CD4-positive, alpha-beta T cell (primary cell): ENCODE measurements at regions of chr7 and their contacts with region 1.

Region 1: GRCh38 chr7:55365675-55366460 is 731 bp downstream of the LANCL2 start:
- DNase-seq: peak; percentile 87 to 98 (median 94)
- ATAC-seq: peak; percentile 85
- H3K4me3 ChIP-seq: peak overlapping the region; percentile 72
- H3K4me3 Mint-ChIP-seq: peak overlapping the region; percentile 99
- H3K27ac ChIP-seq: peak overlapping the region; percentile 94 to 98
- H3K27ac Mint-ChIP-seq: no peak overlapping the region
- H3K4me1 ChIP-seq: peaks cover 16% of the 10 kb centered on the region
- H3K4me1 Mint-ChIP-seq: peaks cover 10% of the 10 kb centered on the region
- H3K27me3 ChIP-seq: no peaks in the 10 kb centered on the region
- H3K27me3 Mint-ChIP-seq: no peaks in the 10 kb centered on the region
- CTCF ChIP-seq: no peak

Region 2: GRCh38 chr7:54758702-54759592 is 606.9 kb before region 1 on chr7 and contains the start of gene SEC61G:
- CTCF ChIA-PET with region 1: interaction called, 4 read pairs
- POLR2A ChIA-PET with region 1: interaction called, 28 read pairs
- intact Hi-C with region 1: loop called in 1 of 2 experiments (anchors 5 kb)
- DNase-seq: peak; percentile 91 to 98 (median 93)
- ATAC-seq: peak; percentile 97
- H3K4me3 ChIP-seq: peak within 1 kb of the TSS; percentile 69
- H3K4me3 Mint-ChIP-seq: peak within 1 kb of the TSS; percentile 96
- H3K27ac ChIP-seq: peak within 1 kb of the TSS; percentile 63 to 73
- H3K27ac Mint-ChIP-seq: peak within 1 kb of the TSS; percentile 95
- H3K4me1 ChIP-seq: peaks cover 21% of the 10 kb centered on the region
- H3K4me1 Mint-ChIP-seq: peaks cover 54% of the 10 kb centered on the region
- H3K27me3 ChIP-seq: no peaks in the 10 kb centered on the region
- H3K27me3 Mint-ChIP-seq: no peaks in the 10 kb centered on the region
- CTCF ChIP-seq: no peak
- total RNA-seq, gene SEC61G: 43.9 to 51.3 TPM

Region 3: GRCh38 chr7:55339033-55340000 is 26.6 kb before region 1 on chr7:
- CTCF ChIA-PET with region 1: no interaction called
- POLR2A ChIA-PET with region 1: no interaction called
- intact Hi-C with region 1: no loop called
- DNase-seq: no peak
- ATAC-seq: no peak
- H3K4me3 ChIP-seq: no peak overlapping the region
- H3K4me3 Mint-ChIP-seq: no peak overlapping the region
- H3K27ac ChIP-seq: no peak overlapping the region
- H3K27ac Mint-ChIP-seq: no peak overlapping the region
- H3K4me1 ChIP-seq: no peaks in the 10 kb centered on the region
- H3K4me1 Mint-ChIP-seq: no peaks in the 10 kb centered on the region
- H3K27me3 ChIP-seq: no peaks in the 10 kb centered on the region
- H3K27me3 Mint-ChIP-seq: no peaks in the 10 kb centered on the region
- CTCF ChIP-seq: no peak

Region 4: DNA sequence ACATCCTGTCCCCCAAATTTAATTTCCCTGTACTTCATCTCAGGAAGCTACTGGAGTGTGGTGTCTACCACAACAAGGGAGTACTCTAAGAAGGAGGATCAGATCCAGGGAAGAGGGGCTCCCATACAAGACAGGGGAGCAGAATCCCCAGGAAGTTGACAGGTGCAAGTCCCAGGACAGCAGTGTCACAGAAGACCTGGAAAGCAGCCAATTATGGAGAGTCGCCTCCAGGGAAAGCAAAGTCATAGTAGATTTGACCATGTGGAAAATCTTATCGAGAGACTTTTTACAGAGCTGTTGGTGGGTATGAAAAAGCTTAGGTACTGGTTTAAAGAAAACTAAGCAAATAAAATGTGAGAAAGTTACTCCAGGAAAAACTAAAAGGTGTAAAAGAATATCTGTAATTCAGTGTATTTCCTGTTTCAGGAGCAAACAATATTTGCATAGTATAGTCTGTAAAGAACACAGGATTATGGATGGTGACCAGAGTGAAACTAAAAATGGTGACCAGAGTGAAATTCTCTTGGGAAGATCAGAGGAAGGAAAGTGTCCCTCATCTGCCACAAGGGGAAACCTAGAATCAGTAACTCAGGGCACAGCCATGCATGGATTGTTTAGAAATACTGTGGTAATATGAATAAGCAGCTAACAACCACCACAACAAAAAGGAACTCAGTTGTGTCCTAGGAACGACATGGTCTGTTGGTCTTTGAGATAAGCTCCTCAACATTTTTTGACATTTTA is 43.8 kb after region 1 on chr7:
- CTCF ChIA-PET with region 1: no interaction called
- POLR2A ChIA-PET with region 1: no interaction called
- intact Hi-C with region 1: loop called (anchors 2 to 5 kb)
- DNase-seq: no peak
- ATAC-seq: no peak
- H3K4me3 ChIP-seq: no peak overlapping the region
- H3K4me3 Mint-ChIP-seq: no peak overlapping the region
- H3K27ac ChIP-seq: no peak overlapping the region
- H3K27ac Mint-ChIP-seq: no peak overlapping the region
- H3K4me1 ChIP-seq: no peaks in the 10 kb centered on the region
- H3K4me1 Mint-ChIP-seq: no peaks in the 10 kb centered on the region
- H3K27me3 ChIP-seq: no peaks in the 10 kb centered on the region
- H3K27me3 Mint-ChIP-seq: no peaks in the 10 kb centered on the region
- CTCF ChIP-seq: no peak

Region 5: GRCh38 chr7:55469271-55469681 is 103.4 kb after region 1 on chr7:
- CTCF ChIA-PET with region 1: no interaction called
- POLR2A ChIA-PET with region 1: interaction called, 22 read pairs
- intact Hi-C with region 1: no loop called
- DNase-seq: peak in 13 of 14 experiments; percentile 25 to 79 (median 46)
- ATAC-seq: peak; percentile 89
- H3K4me3 ChIP-seq: no peak overlapping the region
- H3K4me3 Mint-ChIP-seq: peak overlapping the region; percentile 82
- H3K27ac ChIP-seq: peak overlapping the region; percentile 66 to 79
- H3K27ac Mint-ChIP-seq: peak overlapping the region; percentile 89
- H3K4me1 ChIP-seq: peaks cover 88% of the 10 kb centered on the region
- H3K4me1 Mint-ChIP-seq: peaks cover 76% of the 10 kb centered on the region
- H3K27me3 ChIP-seq: no peaks in the 10 kb centered on the region
- H3K27me3 Mint-ChIP-seq: no peaks in the 10 kb centered on the region
- CTCF ChIP-seq: no peak

Region 6: DNA sequence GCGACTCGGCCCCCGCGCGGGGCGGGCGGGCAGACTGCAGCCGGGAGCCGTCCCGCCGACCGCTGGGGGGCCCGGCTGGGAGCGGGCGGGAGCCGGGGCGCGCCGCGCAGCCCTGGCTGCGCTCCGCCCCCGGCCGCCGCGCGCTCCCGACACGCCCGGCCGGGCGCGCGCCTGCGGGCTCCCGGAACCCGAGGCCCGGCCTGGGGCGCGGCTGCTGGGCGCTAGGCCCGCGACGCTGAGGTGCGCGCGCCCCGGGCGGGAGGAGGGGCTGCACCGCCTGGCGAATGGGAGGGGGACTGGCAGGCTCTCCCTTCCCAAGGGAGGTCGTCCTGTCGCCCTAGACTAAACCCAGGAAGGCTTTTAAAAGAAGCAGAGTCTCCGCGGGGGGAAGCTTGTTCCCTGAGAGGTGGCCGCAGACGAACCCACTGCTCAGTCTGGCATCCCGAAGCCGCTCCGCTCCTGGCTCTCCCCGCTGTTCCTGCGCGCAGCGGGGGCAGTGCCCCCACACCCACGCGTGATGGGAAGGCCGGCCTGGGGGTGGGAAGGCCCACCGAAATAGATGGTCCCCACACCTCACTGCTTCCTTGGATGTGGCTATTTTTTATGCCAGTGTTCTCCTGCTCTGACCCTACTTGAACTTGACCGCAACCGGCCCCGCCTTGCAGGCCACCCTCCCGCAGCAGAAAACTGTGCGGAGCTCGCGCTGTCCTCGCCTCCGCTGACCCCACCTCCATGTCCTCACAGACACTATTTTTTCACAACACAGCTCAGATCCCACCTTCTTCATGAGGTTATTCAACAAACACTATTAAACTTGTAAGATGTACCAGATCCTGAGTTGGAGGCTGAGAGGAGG is 206.7 kb after region 1 on chr7 and contains the start of gene VOPP1:
- CTCF ChIA-PET with region 1: no interaction called
- POLR2A ChIA-PET with region 1: interaction called, 27 read pairs
- intact Hi-C with region 1: loop called (anchors 5 kb)
- DNase-seq: peak in 13 of 14 experiments; percentile 35 to 90 (median 57)
- ATAC-seq: peak; percentile 38
- H3K4me3 ChIP-seq: peak within 1 kb of the TSS; percentile 85
- H3K4me3 Mint-ChIP-seq: peak within 1 kb of the TSS; percentile 96
- H3K27ac ChIP-seq: peak within 1 kb of the TSS; percentile 75 to 89
- H3K27ac Mint-ChIP-seq: peak within 1 kb of the TSS; percentile 87
- H3K4me1 ChIP-seq: peaks cover 59% of the 10 kb centered on the region
- H3K4me1 Mint-ChIP-seq: peaks cover 63% of the 10 kb centered on the region
- H3K27me3 ChIP-seq: no peaks in the 10 kb centered on the region
- H3K27me3 Mint-ChIP-seq: no peaks in the 10 kb centered on the region
- CTCF ChIP-seq: no peak
- total RNA-seq, gene VOPP1: 49.6 to 53.1 TPM

Region 7: GRCh38 chr7:55951637-55952351 is 585.9 kb after region 1 on chr7 and contains the start of gene MRPS17:
- CTCF ChIA-PET with region 1: no interaction called
- POLR2A ChIA-PET with region 1: interaction called, 3 read pairs
- intact Hi-C with region 1: loop called (anchors 5 kb)
- DNase-seq: peak; percentile 82 to 97 (median 91)
- ATAC-seq: peak; percentile 99
- H3K4me3 ChIP-seq: peak within 1 kb of the TSS; percentile 96
- H3K4me3 Mint-ChIP-seq: peak within 1 kb of the TSS; percentile 94
- H3K27ac ChIP-seq: peak within 1 kb of the TSS; percentile 76 to 89
- H3K27ac Mint-ChIP-seq: peak within 1 kb of the TSS; percentile 92
- H3K4me1 ChIP-seq: peaks cover 13% of the 10 kb centered on the region
- H3K4me1 Mint-ChIP-seq: peaks cover 26% of the 10 kb centered on the region
- H3K27me3 ChIP-seq: no peaks in the 10 kb centered on the region
- H3K27me3 Mint-ChIP-seq: no peaks in the 10 kb centered on the region
- CTCF ChIP-seq: no peak
- total RNA-seq, gene MRPS17: 6.7 to 6.9 TPM

Region 8: DNA sequence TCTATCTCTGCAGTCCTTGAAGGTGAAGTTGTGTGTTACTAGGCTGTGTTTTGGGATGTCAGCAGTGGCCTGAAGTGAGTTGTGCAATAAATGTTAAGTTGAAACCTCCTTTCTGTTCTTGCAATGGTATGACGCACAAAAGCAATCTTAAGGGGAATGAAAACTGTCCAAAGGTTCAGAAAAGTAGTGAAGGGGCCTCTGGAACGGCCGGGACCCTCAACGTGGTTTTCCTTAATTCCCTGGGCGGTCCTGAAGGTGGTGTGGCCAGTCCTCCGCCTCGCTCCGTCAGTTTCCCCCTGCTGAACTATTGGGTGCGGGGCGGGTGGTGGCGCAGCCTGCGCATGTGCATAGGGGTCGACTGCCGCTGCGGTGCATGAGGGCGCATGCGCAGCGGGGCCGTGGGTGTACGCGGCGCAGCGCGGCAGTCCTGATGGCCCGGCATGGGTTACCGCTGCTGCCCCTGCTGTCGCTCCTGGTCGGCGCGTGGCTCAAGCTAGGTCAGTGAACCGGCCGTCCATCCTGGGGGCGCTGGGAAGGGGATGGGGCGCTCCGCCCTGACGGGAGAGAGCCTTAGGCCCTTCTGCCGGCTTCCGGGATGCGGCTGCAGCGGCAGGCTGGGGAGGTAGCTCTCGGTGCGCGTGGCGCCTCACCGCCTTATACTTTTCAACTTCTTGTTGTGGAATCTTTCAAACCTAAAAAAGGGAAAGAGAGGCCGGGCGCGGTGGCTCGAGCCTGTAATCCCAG is 698.2 kb after region 1 on chr7 and contains the start of gene SUMF2:
- CTCF ChIA-PET with region 1: no interaction called
- POLR2A ChIA-PET with region 1: interaction called, 14 read pairs
- intact Hi-C with region 1: no loop called
- DNase-seq: peak; percentile 81 to 97 (median 89)
- ATAC-seq: peak; percentile 89
- H3K4me3 ChIP-seq: peak within 1 kb of the TSS; percentile 95
- H3K4me3 Mint-ChIP-seq: peak within 1 kb of the TSS; percentile 93
- H3K27ac ChIP-seq: peak within 1 kb of the TSS; percentile 82 to 84
- H3K27ac Mint-ChIP-seq: peak within 1 kb of the TSS; percentile 95
- H3K4me1 ChIP-seq: peaks cover 25% of the 10 kb centered on the region
- H3K4me1 Mint-ChIP-seq: peaks cover 31% of the 10 kb centered on the region
- H3K27me3 ChIP-seq: no peaks in the 10 kb centered on the region
- H3K27me3 Mint-ChIP-seq: no peaks in the 10 kb centered on the region
- CTCF ChIP-seq: no peak
- total RNA-seq, gene SUMF2: 95.8 to 102 TPM